ENCODE measurements at regions of chr14 and their contacts with region 1.

Region 1: GRCh38 chr14:50082784-50083466 is 33.4 kb downstream of the VCPKMT start:
- DNase-seq: no peak
- H3K4me3 ChIP-seq: no peak overlapping the region
- H3K27ac ChIP-seq: no peak overlapping the region
- H3K4me1 ChIP-seq: no peaks in the 10 kb centered on the region
- H3K27me3 ChIP-seq: no peaks in the 10 kb centered on the region
- CTCF ChIP-seq: no peak
- EP300 ChIP-seq: no peak
- POLR2A ChIP-seq: no peak

Region 2: DNA sequence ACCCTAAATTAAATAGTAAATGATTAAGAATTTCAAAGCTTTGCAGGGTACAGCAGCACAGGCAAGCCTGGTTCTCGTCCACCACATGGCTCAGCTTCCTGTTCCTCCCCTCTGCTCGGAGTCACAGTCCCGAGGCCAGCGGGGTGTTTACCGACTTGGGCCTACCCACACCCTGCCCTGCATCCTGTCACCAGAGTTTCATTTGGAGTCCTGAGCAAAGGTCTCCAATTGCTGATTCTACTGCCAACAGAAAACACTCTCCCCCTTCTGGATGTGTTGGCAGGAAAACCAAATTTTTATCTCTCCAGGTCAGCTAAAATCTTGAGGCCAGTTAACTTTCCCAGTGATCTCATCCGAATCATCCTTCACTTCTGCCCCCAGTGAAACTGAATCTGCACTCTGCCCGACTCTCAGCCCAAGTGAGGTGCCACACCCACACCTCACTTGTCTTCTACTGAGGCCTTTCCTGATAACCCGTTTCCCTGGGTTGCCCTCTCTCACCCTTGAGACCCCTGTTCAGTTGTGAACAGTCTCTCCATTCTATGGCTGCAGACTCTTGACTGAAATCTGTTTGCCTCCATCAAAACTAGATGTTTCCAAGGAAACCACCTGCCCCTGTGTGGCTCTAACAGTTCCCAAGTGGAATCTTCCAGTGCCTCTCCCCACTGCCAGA is 37.8 kb before region 1 on chr14:
- intact Hi-C with region 1: loop called in 1 of 4 experiments (anchors 1 kb)
- DNase-seq: peak in 3 of 5 donors; percentile 24 to 58 (median 25)
- H3K4me3 ChIP-seq: no peak overlapping the region
- H3K27ac ChIP-seq: no peak overlapping the region
- H3K4me1 ChIP-seq: no peaks in the 10 kb centered on the region
- H3K27me3 ChIP-seq: no peaks in the 10 kb centered on the region
- CTCF ChIP-seq: no peak
- EP300 ChIP-seq: no peak
- POLR2A ChIP-seq: no peak

Measured in ovary (tissue), 10 donors.